ENCODE measurements at regions of chr1 and their contacts with region 1.

Region 1: GRCh38 chr1:242651817-242652216 is 127.3 kb upstream of the PLD5 start:
- DNase-seq: peak; percentile 47 to 83
- H3K4me3 ChIP-seq: no peak overlapping the region
- H3K27ac ChIP-seq: no peak overlapping the region
- H3K4me1 ChIP-seq: peaks cover 0 to 4% (median 0%) of the 10 kb centered on the region in 4 experiments; a peak in 1 of 7 replicates
- H3K27me3 ChIP-seq: no peaks in the 10 kb centered on the region
- CTCF ChIP-seq: peak; percentile 63 to 77 (median 70)
- EP300 ChIP-seq: no peak
- POLR2A ChIP-seq: no peak
- RAD21 ChIP-seq: peak; percentile 59 to 71

Region 2: GRCh38 chr1:242454262-242455045 is 197.4 kb before region 1 on chr1:
- CTCF ChIA-PET with region 1: interaction called, 14 read pairs
- POLR2A ChIA-PET with region 1: no interaction called
- DNase-seq: no peak
- H3K4me3 ChIP-seq: no peak overlapping the region
- H3K27ac ChIP-seq: no peak overlapping the region
- H3K4me1 ChIP-seq: peaks cover 2 to 7% (median 3%) of the 10 kb centered on the region in 4 experiments; a peak in 4 of 7 replicates
- H3K27me3 ChIP-seq: no peaks in the 10 kb centered on the region
- CTCF ChIP-seq: peak in 2 of 3 experiments; percentile 62 to 68; a peak in 3 of 4 replicates
- EP300 ChIP-seq: no peak
- POLR2A ChIP-seq: no peak
- RAD21 ChIP-seq: peak; percentile 83 to 84

Region 3: GRCh38 chr1:242634732-242635131 is 17.1 kb before region 1 on chr1:
- CTCF ChIA-PET with region 1: interaction called, 22 read pairs
- POLR2A ChIA-PET with region 1: no interaction called
- DNase-seq: no peak
- H3K4me3 ChIP-seq: no peak overlapping the region
- H3K27ac ChIP-seq: no peak overlapping the region
- H3K4me1 ChIP-seq: no peaks in the 10 kb centered on the region
- H3K27me3 ChIP-seq: no peaks in the 10 kb centered on the region
- CTCF ChIP-seq: no peak
- EP300 ChIP-seq: no peak
- POLR2A ChIP-seq: no peak
- RAD21 ChIP-seq: no peak

Region 4: GRCh38 chr1:242641461-242641860 is 10.4 kb before region 1 on chr1:
- CTCF ChIA-PET with region 1: interaction called, 22 read pairs
- POLR2A ChIA-PET with region 1: no interaction called
- DNase-seq: no peak
- H3K4me3 ChIP-seq: no peak overlapping the region
- H3K27ac ChIP-seq: no peak overlapping the region
- H3K4me1 ChIP-seq: no peaks in the 10 kb centered on the region
- H3K27me3 ChIP-seq: no peaks in the 10 kb centered on the region
- CTCF ChIP-seq: no peak
- EP300 ChIP-seq: no peak
- POLR2A ChIP-seq: no peak
- RAD21 ChIP-seq: no peak

Region 5: GRCh38 chr1:242662886-242663285 is 11.1 kb after region 1 on chr1:
- CTCF ChIA-PET with region 1: interaction called, 40 read pairs
- POLR2A ChIA-PET with region 1: no interaction called
- DNase-seq: no peak
- H3K4me3 ChIP-seq: no peak overlapping the region
- H3K27ac ChIP-seq: no peak overlapping the region
- H3K4me1 ChIP-seq: no peaks in the 10 kb centered on the region
- H3K27me3 ChIP-seq: no peaks in the 10 kb centered on the region
- CTCF ChIP-seq: no peak
- EP300 ChIP-seq: no peak
- POLR2A ChIP-seq: no peak
- RAD21 ChIP-seq: no peak

Region 6: GRCh38 chr1:242670019-242670418 is 18.2 kb after region 1 on chr1:
- CTCF ChIA-PET with region 1: interaction called, 40 read pairs
- POLR2A ChIA-PET with region 1: no interaction called
- DNase-seq: no peak
- H3K4me3 ChIP-seq: no peak overlapping the region
- H3K27ac ChIP-seq: no peak overlapping the region
- H3K4me1 ChIP-seq: peaks cover 0 to 2% (median 0%) of the 10 kb centered on the region in 4 experiments; a peak in 1 of 7 replicates
- H3K27me3 ChIP-seq: no peaks in the 10 kb centered on the region
- CTCF ChIP-seq: no peak
- EP300 ChIP-seq: no peak
- POLR2A ChIP-seq: no peak
- RAD21 ChIP-seq: no peak

Region 7: GRCh38 chr1:242690849-242691602 is 39.2 kb after region 1 on chr1:
- CTCF ChIA-PET with region 1: interaction called, 11 read pairs
- POLR2A ChIA-PET with region 1: no interaction called
- DNase-seq: no peak
- H3K4me3 ChIP-seq: no peak overlapping the region
- H3K27ac ChIP-seq: no peak overlapping the region
- H3K4me1 ChIP-seq: no peaks in the 10 kb centered on the region
- H3K27me3 ChIP-seq: no peaks in the 10 kb centered on the region
- CTCF ChIP-seq: no peak
- EP300 ChIP-seq: no peak
- POLR2A ChIP-seq: no peak
- RAD21 ChIP-seq: no peak

Region 8: DNA sequence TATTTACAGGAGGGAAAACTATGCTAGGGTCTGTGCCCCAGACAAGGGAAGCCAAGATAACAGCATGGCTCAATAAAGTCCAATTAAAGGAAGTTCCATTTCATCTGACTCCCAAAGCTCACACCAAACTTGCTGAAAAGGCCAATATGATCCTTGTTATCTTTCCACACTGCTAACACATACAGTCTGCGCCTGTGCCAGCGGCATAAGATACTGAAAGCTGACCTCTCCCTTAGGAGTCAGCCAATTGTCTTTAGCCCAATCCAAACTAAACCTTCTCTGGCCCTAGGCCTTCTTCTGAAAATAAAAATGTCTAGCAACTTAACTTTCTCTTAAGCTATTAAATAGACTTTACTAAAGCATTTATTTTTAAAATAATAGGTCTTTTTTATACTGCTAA is 51.6 kb after region 1 on chr1:
- CTCF ChIA-PET with region 1: no interaction called
- POLR2A ChIA-PET with region 1: no interaction called
- DNase-seq: no peak
- H3K4me3 ChIP-seq: no peak overlapping the region
- H3K27ac ChIP-seq: no peak overlapping the region
- H3K4me1 ChIP-seq: no peaks in the 10 kb centered on the region
- H3K27me3 ChIP-seq: no peaks in the 10 kb centered on the region
- CTCF ChIP-seq: no peak
- EP300 ChIP-seq: no peak
- POLR2A ChIP-seq: no peak
- RAD21 ChIP-seq: no peak